Right cardiac atrium (tissue), 5 donors: ENCODE measurements at regions of chr1 and their contacts with region 1.

Region 1: DNA sequence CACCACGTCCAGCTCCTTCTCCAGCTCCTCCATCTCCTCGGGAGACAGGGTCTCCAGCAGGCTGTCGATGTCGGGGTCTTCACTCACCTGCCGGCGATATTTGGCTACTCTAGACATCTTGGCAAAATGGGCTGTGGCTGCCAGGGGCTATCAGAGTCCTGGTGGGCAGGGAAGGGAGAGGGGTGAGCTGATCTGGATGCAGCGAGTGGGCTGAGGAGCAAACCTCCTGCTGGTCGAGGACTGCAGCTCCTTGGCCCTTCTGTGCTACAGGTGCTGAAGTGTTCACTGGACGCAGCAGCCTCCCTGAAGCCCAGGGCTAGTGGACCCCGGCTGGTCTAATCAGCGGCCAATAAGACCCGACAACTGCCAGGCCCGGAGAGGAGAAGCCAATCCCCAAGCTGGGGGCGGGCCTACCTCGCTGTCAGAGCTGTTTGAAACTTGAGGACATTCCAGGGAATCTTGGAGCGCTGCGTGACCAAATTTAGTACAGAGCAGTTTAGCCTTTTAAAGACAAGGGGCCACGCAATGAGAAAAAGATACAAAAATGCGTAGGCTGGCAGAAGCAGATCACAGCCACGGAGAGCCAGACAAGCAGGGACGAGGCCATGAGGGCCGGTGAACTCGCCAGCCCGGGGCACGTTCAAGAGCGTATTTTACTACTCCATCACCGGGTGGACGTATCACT is at the start of gene LMOD1:
- DNase-seq: peak; percentile 88 to 95 (median 93)
- ATAC-seq: peak; percentile 94 to 96
- H3K4me3 ChIP-seq: peak within 1 kb of the TSS; percentile 78
- H3K27ac ChIP-seq: peak within 1 kb of the TSS; percentile 81
- H3K4me1 ChIP-seq: peaks cover 5% of the 10 kb centered on the region
- H3K27me3 ChIP-seq: no peaks in the 10 kb centered on the region
- total RNA-seq, gene LMOD1: 22.0 to 40.6 (median 33.0) TPM

Region 2: DNA sequence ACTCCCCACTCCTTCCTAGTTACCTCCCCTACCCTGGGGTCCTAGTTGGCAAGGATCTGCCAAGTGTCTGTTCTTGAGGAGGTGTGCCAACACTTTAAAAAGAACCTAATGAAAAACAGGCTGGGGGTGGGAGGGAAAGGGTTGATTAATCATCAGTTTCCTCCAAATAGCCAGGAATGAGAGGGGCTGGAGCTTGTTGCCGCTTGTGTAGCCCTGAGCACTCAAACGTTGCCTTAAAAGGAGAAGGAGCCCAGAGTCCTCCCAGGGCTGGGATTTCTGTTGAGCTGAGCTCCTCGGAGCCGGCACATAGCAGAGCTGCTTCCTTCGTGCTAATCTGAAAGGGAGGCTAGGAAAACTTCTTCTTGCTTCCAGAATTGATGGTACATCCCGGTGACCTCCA is 41.8 kb before region 1 on chr1:
- intact Hi-C with region 1: loop called in 1 of 4 experiments (anchors 5 kb)
- DNase-seq: peak in 2 of 3 donors; percentile 60 to 79
- ATAC-seq: peak; percentile 77 to 82
- H3K4me3 ChIP-seq: no peak overlapping the region
- H3K27ac ChIP-seq: peak overlapping the region; percentile 78
- H3K4me1 ChIP-seq: peaks cover 15% of the 10 kb centered on the region
- H3K27me3 ChIP-seq: no peaks in the 10 kb centered on the region